ENCODE measurements at regions of chr12 and their contacts with region 1.

Region 1: GRCh38 chr12:56258057-56258819 is at the start of gene ANKRD52:
- DNase-seq: peak; percentile 70 to 82 (median 74)
- H3K4me3 ChIP-seq: peak within 1 kb of the TSS; percentile 3 to 90 (median 74)
- H3K27ac ChIP-seq: peak within 1 kb of the TSS; percentile 64 to 95 (median 91)
- H3K4me1 ChIP-seq: peaks cover 19 to 30% of the 10 kb centered on the region in 2 donors
- H3K27me3 ChIP-seq: no peaks in the 10 kb centered on the region
- CTCF ChIP-seq: peak in 5 of 6 experiments; percentile 34 to 92 (median 86)
- POLR2A ChIP-seq: peak in 1 of 2 donors; percentile 16
- total RNA-seq, gene ANKRD52: 21.3 to 86.8 (median 28.5) TPM

Region 2: DNA sequence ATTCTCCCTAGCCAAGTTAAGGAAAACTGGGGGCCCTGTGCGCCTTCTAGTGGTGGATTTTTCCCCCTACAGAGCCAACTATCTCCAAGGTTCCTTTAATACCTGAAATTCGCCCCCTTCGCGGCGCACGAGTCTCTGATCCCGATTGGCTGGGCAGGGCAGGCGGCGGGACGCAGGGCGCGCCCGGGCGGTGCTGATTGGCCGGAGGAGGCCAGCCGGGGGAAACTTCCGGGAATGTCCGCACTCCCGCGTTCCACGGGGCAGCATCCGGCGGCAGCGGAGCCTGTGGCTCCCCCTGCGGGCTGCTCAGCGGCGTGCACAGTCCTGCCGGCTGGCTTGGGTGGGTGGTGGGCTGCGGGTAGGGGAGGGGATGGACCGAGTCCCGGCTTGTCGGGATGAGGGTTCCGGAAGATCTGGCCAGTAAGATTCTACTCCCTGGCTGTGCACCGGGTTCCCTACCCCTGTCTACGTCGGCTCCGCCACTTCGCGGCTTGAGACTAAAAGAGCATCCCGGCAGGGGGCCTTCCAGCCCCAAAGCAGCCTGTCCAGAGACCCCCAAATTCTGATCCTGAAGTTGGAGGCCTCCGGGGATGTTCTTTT is 34.0 kb before region 1 on chr12 and contains the start of gene NABP2:
- intact Hi-C with region 1: loop called in 1 of 2 experiments (anchors 5 kb)
- DNase-seq: peak; percentile 96 to 99 (median 98)
- H3K4me3 ChIP-seq: peak within 1 kb of the TSS in 3 of 4 donors; percentile 32 to 69 (median 56)
- H3K27ac ChIP-seq: peak within 1 kb of the TSS; percentile 10 to 99 (median 67)
- H3K4me1 ChIP-seq: peaks cover 18 to 42% of the 10 kb centered on the region in 2 donors
- H3K27me3 ChIP-seq: no peaks in the 10 kb centered on the region
- CTCF ChIP-seq: peak; percentile 81 to 93 (median 84)
- POLR2A ChIP-seq: peak in 1 of 2 donors; percentile 59
- total RNA-seq, gene NABP2: 23.8 to 55.4 (median 48.4) TPM

Region 3: GRCh38 chr12:56541631-56542030 is 283.4 kb after region 1 on chr12:
- intact Hi-C with region 1: no loop called
- DNase-seq: no peak
- H3K4me3 ChIP-seq: no peak overlapping the region
- H3K27ac ChIP-seq: no peak overlapping the region
- H3K4me1 ChIP-seq: peaks cover 0 to 10% of the 10 kb centered on the region in 2 donors
- H3K27me3 ChIP-seq: no peaks in the 10 kb centered on the region
- CTCF ChIP-seq: no peak
- POLR2A ChIP-seq: no peak

Measured in adrenal gland (tissue), 19 donors.